OCI-LY7 (cell line): ENCODE measurements at regions of chr2 and their contacts with region 1.

Region 1: GRCh38 chr2:64704161-64704560 is 50.4 kb upstream of the SERTAD2 start:
- DNase-seq: no peak
- H3K4me3 ChIP-seq: no peak overlapping the region
- H3K27ac ChIP-seq: no peak overlapping the region
- H3K4me1 ChIP-seq: peaks cover 20% of the 10 kb centered on the region
- CTCF ChIP-seq: no peak

Region 2: GRCh38 chr2:64692401-64692800 is 11.8 kb before region 1 on chr2:
- CTCF ChIA-PET with region 1: no interaction called
- POLR2A ChIA-PET with region 1: interaction called, 14 read pairs
- intact Hi-C with region 1: no loop called
- DNase-seq: no peak
- H3K4me3 ChIP-seq: no peak overlapping the region
- H3K27ac ChIP-seq: no peak overlapping the region
- H3K4me1 ChIP-seq: peaks cover 28% of the 10 kb centered on the region
- CTCF ChIP-seq: no peak